ENCODE measurements at regions of chr9 and their contacts with region 1.

Region 1: GRCh38 chr9:136312436-136312835 is 8.5 kb upstream of the CCDC187 start:
- DNase-seq: peak; percentile 55 to 76 (median 67)
- H3K4me3 ChIP-seq: no peak overlapping the region
- H3K27ac ChIP-seq: no peak overlapping the region
- H3K4me1 ChIP-seq: no peaks in the 10 kb centered on the region
- H3K27me3 ChIP-seq: no peaks in the 10 kb centered on the region
- CTCF ChIP-seq: peak; percentile 50 to 72 (median 70)
- EP300 ChIP-seq: no peak
- POLR2A ChIP-seq: no peak

Region 2: DNA sequence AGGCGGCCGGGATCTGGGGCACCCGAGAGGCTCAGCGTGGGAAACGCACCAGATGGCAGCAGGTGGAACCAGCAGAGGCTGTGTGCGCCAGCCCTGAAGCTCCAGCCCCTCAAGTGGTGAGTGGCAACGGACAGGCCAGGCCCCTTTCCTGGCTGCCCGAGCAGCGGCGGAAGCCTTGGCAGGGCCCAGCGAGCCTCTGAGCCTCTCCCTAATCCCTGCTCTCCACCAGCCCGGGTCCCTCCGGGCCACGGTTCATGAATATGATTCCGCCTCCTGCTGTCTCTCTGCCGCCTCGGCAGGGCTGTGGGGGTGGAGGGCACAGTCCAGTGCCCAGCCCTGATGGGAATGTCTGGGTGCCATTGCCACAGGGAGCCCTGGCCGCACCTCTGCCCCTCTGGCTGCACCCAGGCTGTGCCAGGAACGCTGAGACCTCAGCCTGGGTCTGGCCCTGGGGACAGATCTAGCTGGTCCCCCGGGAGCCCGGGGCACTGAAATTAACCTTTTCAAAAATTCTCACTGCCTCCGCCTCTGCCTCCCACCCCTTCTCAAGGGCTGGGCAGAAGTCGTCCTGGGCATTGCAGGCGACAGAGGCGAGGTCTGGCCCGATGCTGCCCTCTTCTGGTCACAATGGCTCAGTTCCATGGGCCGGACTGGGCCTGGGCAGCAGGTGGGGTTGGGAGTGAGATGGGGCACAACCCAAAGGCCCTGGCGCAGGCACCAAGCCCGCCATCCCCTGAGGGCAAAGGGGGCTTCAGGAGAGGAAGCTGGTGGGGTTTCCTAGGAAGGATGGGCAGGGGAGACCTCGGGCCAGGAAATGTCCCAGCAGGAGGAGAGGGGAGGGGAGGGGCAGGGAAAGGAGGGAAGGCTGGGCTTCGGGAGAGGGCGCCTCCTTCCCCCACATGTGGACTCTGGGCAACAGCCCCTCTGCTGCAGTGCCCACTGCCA is 28.9 kb before region 1 on chr9:
- intact Hi-C with region 1: no loop called
- DNase-seq: peak; percentile 67 to 84 (median 76)
- H3K4me3 ChIP-seq: no peak overlapping the region
- H3K27ac ChIP-seq: no peak overlapping the region
- H3K4me1 ChIP-seq: no peaks in the 10 kb centered on the region
- H3K27me3 ChIP-seq: no peaks in the 10 kb centered on the region
- CTCF ChIP-seq: peak; percentile 63 to 75 (median 68)
- EP300 ChIP-seq: no peak
- POLR2A ChIP-seq: no peak

Region 3: GRCh38 chr9:136297016-136297691 is 15.3 kb before region 1 on chr9:
- intact Hi-C with region 1: no loop called
- DNase-seq: no peak
- H3K4me3 ChIP-seq: no peak overlapping the region
- H3K27ac ChIP-seq: no peak overlapping the region
- H3K4me1 ChIP-seq: no peaks in the 10 kb centered on the region
- H3K27me3 ChIP-seq: no peaks in the 10 kb centered on the region
- CTCF ChIP-seq: no peak
- EP300 ChIP-seq: no peak
- POLR2A ChIP-seq: no peak

Region 4: GRCh38 chr9:136342181-136343120 is 30.0 kb after region 1 on chr9:
- intact Hi-C with region 1: no loop called
- DNase-seq: peak; percentile 79 to 92 (median 86)
- H3K4me3 ChIP-seq: peak overlapping the region; percentile 39
- H3K27ac ChIP-seq: peak overlapping the region in 1 of 2 donors; percentile 54
- H3K4me1 ChIP-seq: peaks cover 4% of the 10 kb centered on the region
- H3K27me3 ChIP-seq: no peaks in the 10 kb centered on the region
- CTCF ChIP-seq: no peak
- EP300 ChIP-seq: no peak
- POLR2A ChIP-seq: no peak

Region 5: DNA sequence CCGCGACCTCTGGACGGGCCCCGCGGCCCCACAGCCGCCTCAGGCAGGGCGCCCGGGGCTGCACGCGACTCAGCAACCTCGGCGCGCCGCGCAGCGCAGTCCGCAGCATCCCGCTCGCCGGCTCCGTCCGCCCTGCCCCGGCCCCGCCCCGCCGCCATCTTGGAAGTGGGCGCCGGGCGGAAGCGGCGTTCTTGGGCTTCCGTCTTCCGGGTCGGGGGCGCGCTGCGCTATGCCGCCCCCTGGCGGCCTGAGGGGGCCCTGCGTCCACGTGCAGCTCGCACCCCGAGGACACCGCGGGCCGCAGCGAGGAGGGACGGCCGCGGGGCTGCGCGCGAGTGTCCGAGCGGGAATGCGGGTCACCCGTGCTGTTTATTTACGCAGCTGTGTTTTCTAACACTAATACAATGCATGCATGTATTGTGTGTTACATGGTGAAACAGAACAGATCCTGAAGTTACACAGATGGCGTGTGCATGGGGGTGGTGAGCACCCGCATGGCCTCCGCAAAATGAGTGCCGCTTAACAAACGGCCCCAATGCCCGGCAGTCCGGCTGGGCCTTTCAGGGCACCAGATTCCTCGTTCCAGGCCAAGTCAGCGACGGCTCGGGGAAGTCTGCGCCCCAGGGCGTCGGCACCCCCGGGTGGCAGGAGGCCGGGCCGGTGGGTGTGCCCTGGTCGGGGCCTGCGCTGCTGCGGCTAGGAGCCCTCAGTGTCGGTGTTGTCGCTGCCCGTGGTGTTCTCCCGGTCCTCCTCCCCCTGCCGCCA is 51.4 kb after region 1 on chr9 and contains the start of gene DNLZ:
- intact Hi-C with region 1: loop called in 3 of 4 experiments (anchors 2 to 5 kb)
- DNase-seq: peak; percentile 80 to 92 (median 87)
- H3K4me3 ChIP-seq: peak within 1 kb of the TSS; percentile 93
- H3K27ac ChIP-seq: peak within 1 kb of the TSS; percentile 79 to 89
- H3K4me1 ChIP-seq: peaks cover 7% of the 10 kb centered on the region
- H3K27me3 ChIP-seq: no peaks in the 10 kb centered on the region
- CTCF ChIP-seq: peak; percentile 98 to 99 (median 99)
- EP300 ChIP-seq: no peak
- POLR2A ChIP-seq: peak; percentile 33
- total RNA-seq, gene DNLZ: 14.4 to 33.3 (median 24.2) TPM

Region 6: GRCh38 chr9:136400038-136400834 is 87.8 kb after region 1 on chr9 and contains the start of gene SNAPC4:
- intact Hi-C with region 1: loop called in 2 of 4 experiments (anchors 2 to 5 kb)
- DNase-seq: peak; percentile 78 to 92 (median 86)
- H3K4me3 ChIP-seq: peak within 1 kb of the TSS; percentile 89
- H3K27ac ChIP-seq: no peak within 1 kb of the TSS
- H3K4me1 ChIP-seq: peaks cover 13% of the 10 kb centered on the region
- H3K27me3 ChIP-seq: no peaks in the 10 kb centered on the region
- CTCF ChIP-seq: peak; percentile 90 to 96 (median 92)
- EP300 ChIP-seq: no peak
- POLR2A ChIP-seq: no peak
- total RNA-seq, gene SNAPC4: 5.4 to 9.6 (median 8.9) TPM

Region 7: DNA sequence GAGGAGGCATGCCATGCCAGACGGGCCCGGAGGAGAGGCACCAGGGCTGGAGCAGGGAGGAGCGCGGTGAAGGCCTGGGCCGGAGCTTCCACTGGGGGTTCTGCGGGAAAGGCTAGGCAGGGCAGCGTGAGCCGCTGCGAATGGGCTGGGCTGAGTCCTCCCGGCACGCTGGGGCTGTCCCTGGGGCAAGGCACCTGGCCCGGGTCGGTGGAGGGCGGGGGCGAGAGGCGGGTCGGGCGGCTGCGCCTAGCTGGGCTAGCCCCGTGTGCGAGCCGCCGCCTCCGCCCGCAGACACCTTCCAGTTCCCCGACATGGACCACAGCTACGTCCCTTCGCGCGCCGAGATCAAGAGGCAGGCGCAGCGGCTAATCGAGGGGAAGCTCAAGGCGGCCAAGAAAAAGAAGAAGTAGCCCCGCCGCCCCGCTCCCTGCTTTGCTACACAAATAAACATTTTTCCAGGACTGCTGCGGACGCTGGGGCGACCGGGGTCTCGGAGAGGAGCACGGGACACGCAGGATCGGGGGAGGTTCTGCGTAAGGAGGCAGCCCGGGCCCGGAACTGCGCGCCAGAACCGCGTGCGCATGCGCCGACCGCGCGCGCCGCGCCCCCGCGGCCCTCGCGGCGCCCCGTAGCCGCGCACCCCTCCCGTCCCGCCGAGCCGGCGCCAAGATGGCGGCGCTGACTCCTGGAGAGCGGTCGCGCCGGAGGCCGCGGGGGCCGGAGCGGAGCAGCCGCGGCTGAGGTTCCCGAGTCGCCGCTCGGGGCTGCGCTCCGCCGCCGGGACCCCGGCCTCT is 495.0 kb after region 1 on chr9 and contains the start of gene RABL6:
- intact Hi-C with region 1: no loop called
- DNase-seq: peak; percentile 76 to 89 (median 83)
- H3K4me3 ChIP-seq: peak within 1 kb of the TSS; percentile 94
- H3K27ac ChIP-seq: peak within 1 kb of the TSS; percentile 76 to 79
- H3K4me1 ChIP-seq: peaks cover 3% of the 10 kb centered on the region
- H3K27me3 ChIP-seq: no peaks in the 10 kb centered on the region
- CTCF ChIP-seq: no peak
- EP300 ChIP-seq: no peak
- POLR2A ChIP-seq: peak; percentile 66
- total RNA-seq, gene RABL6: 25.2 to 65.4 (median 56.2) TPM